Naive thymus-derived CD4-positive, alpha-beta T cell (primary cell): ENCODE measurements at regions of chr16 and their contacts with region 1.

Region 1: DNA sequence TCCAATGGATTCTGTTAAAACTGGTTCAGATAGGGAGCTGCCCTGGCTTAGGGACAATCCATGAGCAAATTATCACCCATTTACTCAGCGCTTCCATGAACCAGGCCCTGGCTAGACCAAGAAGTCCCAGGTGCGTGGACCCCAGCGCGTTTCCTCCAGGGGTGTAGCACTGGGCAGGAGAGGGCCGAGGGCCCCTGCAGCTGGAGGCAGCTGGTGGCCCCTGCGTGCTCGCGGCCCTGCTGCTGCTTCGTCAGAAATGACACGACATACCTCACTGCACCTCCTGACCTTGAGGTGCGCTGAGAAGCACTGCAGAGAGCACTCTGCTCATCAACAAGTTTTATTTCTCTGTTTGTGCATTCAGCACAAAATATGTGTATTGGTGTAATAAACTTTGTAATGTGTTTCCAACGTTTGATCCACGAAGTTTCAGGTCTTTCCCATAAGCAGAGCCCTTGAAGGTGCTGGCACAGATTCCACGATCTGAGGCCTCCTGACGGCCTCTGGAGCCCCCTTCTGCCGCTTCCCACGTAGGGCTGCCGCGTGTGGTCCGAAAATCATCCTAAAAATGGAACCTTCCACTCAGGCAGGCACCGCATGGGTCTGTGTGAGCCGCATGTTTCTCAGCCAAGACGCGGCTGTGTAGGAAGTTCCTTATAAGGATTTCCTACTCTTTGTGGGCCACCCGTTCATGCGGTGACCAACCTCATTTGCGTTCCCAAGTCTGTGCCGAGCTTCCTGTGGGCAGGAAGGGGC is 50.8 kb upstream of the ZCCHC14 start:
- DNase-seq: no peak
- ATAC-seq: no peak
- H3K4me3 ChIP-seq: no peak overlapping the region
- H3K4me3 Mint-ChIP-seq: peak overlapping the region in 2 of 10 donors; percentile 17 to 53
- H3K27ac ChIP-seq: no peak overlapping the region
- H3K27ac Mint-ChIP-seq: no peak overlapping the region
- H3K4me1 ChIP-seq: no peaks in the 10 kb centered on the region
- H3K4me1 Mint-ChIP-seq: peaks cover 0 to 6% (median 0%) of the 10 kb centered on the region in 7 donors
- H3K27me3 ChIP-seq: no peaks in the 10 kb centered on the region
- H3K27me3 Mint-ChIP-seq: peaks cover 18 to 38% (median 33%) of the 10 kb centered on the region in 5 donors

Region 2: GRCh38 chr16:87252269-87252970 is 291.2 kb before region 1 on chr16:
- CTCF ChIA-PET with region 1: no interaction called
- POLR2A ChIA-PET with region 1: no interaction called
- intact Hi-C with region 1: no loop called
- DNase-seq: no peak
- ATAC-seq: no peak
- H3K4me3 ChIP-seq: no peak overlapping the region
- H3K4me3 Mint-ChIP-seq: no peak overlapping the region
- H3K27ac ChIP-seq: no peak overlapping the region
- H3K27ac Mint-ChIP-seq: peak overlapping the region in 1 of 9 donors; percentile 42
- H3K4me1 ChIP-seq: no peaks in the 10 kb centered on the region
- H3K4me1 Mint-ChIP-seq: peaks cover 0 to 9% (median 0%) of the 10 kb centered on the region in 7 donors
- H3K27me3 ChIP-seq: no peaks in the 10 kb centered on the region
- H3K27me3 Mint-ChIP-seq: peaks cover 0 to 3% (median 0%) of the 10 kb centered on the region in 5 donors

Region 3: GRCh38 chr16:87416826-87417527 is 126.6 kb before region 1 on chr16:
- CTCF ChIA-PET with region 1: no interaction called
- POLR2A ChIA-PET with region 1: no interaction called
- intact Hi-C with region 1: loop called in 1 of 2 experiments (anchors 2 kb)
- DNase-seq: peak in 6 of 9 donors; percentile 25 to 48 (median 42)
- ATAC-seq: no peak
- H3K4me3 ChIP-seq: no peak overlapping the region
- H3K4me3 Mint-ChIP-seq: no peak overlapping the region
- H3K27ac ChIP-seq: no peak overlapping the region
- H3K27ac Mint-ChIP-seq: no peak overlapping the region
- H3K4me1 ChIP-seq: no peaks in the 10 kb centered on the region
- H3K4me1 Mint-ChIP-seq: peaks cover 0 to 8% (median 0%) of the 10 kb centered on the region in 7 donors
- H3K27me3 ChIP-seq: no peaks in the 10 kb centered on the region
- H3K27me3 Mint-ChIP-seq: no peaks in the 10 kb centered on the region

Region 4: GRCh38 chr16:87461466-87461991 is 82.1 kb before region 1 on chr16:
- CTCF ChIA-PET with region 1: no interaction called
- POLR2A ChIA-PET with region 1: no interaction called
- intact Hi-C with region 1: loop called in 1 of 2 experiments (anchors 1 kb)
- DNase-seq: peak in 1 of 9 donors; percentile 6
- ATAC-seq: no peak
- H3K4me3 ChIP-seq: no peak overlapping the region
- H3K4me3 Mint-ChIP-seq: no peak overlapping the region
- H3K27ac ChIP-seq: no peak overlapping the region
- H3K27ac Mint-ChIP-seq: peak overlapping the region in 4 of 9 donors; percentile 34 to 46 (median 43)
- H3K4me1 ChIP-seq: peaks cover 17 to 27% of the 10 kb centered on the region in 2 donors
- H3K4me1 Mint-ChIP-seq: peaks cover 32 to 43% (median 38%) of the 10 kb centered on the region in 7 donors
- H3K27me3 ChIP-seq: no peaks in the 10 kb centered on the region
- H3K27me3 Mint-ChIP-seq: peaks cover 0 to 4% (median 0%) of the 10 kb centered on the region in 5 donors

Region 5: DNA sequence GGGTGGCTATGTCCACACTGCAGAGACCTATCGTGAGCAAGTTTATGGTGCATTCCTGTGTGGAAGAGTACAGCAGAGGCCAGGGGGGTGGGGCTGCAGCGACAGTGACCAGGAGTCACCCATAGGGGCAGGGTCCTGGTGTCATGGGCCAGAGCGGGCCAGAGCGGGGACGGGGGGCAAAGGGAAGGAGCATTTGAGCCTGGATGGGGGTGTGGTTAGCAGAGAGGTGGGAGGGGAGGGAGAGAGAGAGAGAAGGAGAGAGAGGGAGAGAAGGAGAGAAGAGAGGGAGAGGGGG is 76.5 kb after region 1 on chr16:
- CTCF ChIA-PET with region 1: no interaction called
- POLR2A ChIA-PET with region 1: no interaction called
- intact Hi-C with region 1: no loop called
- DNase-seq: no peak
- ATAC-seq: no peak
- H3K4me3 ChIP-seq: no peak overlapping the region
- H3K4me3 Mint-ChIP-seq: no peak overlapping the region
- H3K27ac ChIP-seq: no peak overlapping the region
- H3K27ac Mint-ChIP-seq: no peak overlapping the region
- H3K4me1 ChIP-seq: no peaks in the 10 kb centered on the region
- H3K4me1 Mint-ChIP-seq: no peaks in the 10 kb centered on the region
- H3K27me3 ChIP-seq: no peaks in the 10 kb centered on the region
- H3K27me3 Mint-ChIP-seq: peaks cover 0 to 24% (median 0%) of the 10 kb centered on the region in 5 donors